Panc1 (cell line): ENCODE measurements at regions of chr6 and their contacts with region 1.

Region 1: DNA sequence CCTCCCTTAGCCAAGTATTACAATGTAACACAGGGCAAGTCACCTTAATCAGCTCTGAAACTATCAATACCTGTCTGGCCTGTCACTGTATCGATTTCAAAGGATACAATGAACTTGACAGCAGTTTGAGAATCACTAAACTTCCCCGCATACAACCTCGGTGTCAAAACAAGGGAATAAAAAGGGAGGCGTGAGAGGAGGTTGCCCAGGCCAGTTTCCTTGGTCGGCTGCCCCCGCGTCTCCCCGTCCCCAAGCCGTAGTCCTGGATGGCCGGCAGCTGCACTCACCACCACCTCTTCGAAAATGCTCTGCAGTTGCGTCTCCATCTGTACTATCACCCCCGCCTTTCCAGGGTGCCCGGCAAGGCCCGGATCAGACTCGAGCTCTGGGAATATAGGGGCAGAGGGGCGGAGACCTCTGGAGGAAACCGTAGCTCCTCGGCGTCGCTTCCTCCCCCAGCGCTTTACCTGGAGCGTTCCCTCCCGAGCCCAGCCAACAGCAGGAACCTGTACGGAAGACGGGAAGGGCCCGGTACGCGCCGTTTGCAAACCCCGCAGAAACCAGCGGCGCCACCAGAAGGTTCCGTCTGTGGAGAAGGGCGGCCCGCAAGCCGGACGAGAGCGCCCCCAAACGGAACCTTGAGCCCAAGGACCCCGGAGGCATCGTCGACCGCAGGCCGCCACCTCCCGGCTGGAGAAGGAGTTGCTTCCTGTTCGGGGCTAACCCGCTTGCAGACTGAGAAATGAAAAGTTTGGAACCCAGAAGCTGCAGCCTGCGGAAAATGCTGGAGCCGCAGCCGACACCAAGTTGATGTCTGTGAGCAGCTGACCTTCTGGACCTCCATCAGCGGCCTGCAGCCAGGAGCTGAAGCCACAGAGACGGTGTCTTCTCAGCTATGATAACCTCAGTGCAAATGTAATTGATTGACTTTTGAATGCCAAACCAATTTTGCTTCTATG is at the start of gene MED23:
- DNase-seq: peak; percentile 73
- ATAC-seq: peak; percentile 99
- H3K4me3 ChIP-seq: peak within 1 kb of the TSS; percentile 67 to 71
- H3K27ac ChIP-seq: peak within 1 kb of the TSS; percentile 77
- H3K4me1 ChIP-seq: peaks cover 7% of the 10 kb centered on the region; the same call in 1 of the 2 replicates
- H3K27me3 ChIP-seq: 0 out of 2 replicates have a peak, but pooled peaks cover 2% of the 10 kb centered on the region
- CTCF ChIP-seq: peak; percentile 100
- total RNA-seq, gene MED23: 18.3 TPM

Region 2: DNA sequence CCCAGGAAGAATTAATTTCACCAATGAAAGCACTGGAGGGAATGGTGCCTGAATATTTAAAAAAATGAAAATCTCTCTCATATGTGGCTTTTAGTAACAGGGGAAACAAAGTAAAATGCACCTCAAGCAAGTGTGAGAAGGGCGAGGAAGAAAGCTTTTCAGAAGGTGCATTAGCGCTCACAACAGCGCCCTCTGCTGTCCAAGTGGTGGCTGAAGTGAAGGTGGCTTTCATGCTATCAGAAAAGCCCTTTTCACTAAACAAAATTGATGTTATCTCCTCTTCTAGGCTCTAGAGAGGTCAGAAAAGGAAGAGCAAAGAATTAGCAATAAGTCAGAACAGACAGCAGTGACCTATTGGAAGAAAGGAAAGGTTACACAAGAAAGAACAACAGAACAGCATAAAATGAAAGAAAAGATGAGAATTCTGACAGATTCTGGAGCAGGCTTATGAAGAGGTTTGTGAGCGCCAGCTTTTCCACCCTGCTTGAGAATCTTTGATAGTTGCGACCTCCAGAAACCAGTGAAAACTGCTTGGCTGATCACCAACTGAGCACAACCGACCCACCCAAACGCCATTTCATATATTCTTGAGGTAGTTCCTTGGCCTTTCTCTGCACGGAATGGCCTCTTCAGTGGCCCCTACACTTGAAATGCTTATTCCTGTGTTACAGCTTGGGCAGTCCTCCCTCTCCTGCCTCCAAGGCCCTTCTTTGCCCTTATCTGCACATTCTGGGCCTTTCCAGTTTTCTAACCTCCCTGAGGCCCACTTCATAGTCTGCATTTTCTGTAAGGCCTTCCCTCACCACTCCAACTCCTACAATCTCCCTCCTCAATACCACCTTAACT is 755.5 kb before region 1 on chr6:
- CTCF ChIA-PET with region 1: no interaction called
- POLR2A ChIA-PET with region 1: no interaction called
- in situ Hi-C with region 1: no loop called
- intact Hi-C with region 1: loop called (anchors 10 kb)
- DNase-seq: peak; percentile 53
- ATAC-seq: peak; percentile 78
- H3K4me3 ChIP-seq: no peak overlapping the region
- H3K27ac ChIP-seq: no peak overlapping the region
- H3K4me1 ChIP-seq: no peaks in the 10 kb centered on the region
- H3K27me3 ChIP-seq: no peaks in the 10 kb centered on the region
- CTCF ChIP-seq: peak; percentile 96

Region 3: GRCh38 chr6:131807644-131808459 is 179.8 kb after region 1 on chr6 and contains the start of gene ENPP1:
- CTCF ChIA-PET with region 1: interaction called, 14 read pairs
- POLR2A ChIA-PET with region 1: no interaction called
- in situ Hi-C with region 1: no loop called
- intact Hi-C with region 1: no loop called
- DNase-seq: no peak
- ATAC-seq: peak; percentile 92
- H3K4me3 ChIP-seq: peak within 1 kb of the TSS; percentile 53 to 81
- H3K27ac ChIP-seq: peak within 1 kb of the TSS; percentile 34; the same call in 1 of the 2 replicates
- H3K4me1 ChIP-seq: peaks cover 5% of the 10 kb centered on the region; the same call in 1 of the 2 replicates
- H3K27me3 ChIP-seq: peaks cover 4% of the 10 kb centered on the region
- CTCF ChIP-seq: no peak
- total RNA-seq, gene ENPP1: 6.8 TPM